Dendritic cell treated with granulocyte-macrophage colony-stimulating factor and Interleukin-4, amounts not matched to agents 40 ng/mL and 50 ng/mL, for 4 days (primary cell): ENCODE measurements at regions of chr4 and their contacts with region 1.

Region 1: DNA sequence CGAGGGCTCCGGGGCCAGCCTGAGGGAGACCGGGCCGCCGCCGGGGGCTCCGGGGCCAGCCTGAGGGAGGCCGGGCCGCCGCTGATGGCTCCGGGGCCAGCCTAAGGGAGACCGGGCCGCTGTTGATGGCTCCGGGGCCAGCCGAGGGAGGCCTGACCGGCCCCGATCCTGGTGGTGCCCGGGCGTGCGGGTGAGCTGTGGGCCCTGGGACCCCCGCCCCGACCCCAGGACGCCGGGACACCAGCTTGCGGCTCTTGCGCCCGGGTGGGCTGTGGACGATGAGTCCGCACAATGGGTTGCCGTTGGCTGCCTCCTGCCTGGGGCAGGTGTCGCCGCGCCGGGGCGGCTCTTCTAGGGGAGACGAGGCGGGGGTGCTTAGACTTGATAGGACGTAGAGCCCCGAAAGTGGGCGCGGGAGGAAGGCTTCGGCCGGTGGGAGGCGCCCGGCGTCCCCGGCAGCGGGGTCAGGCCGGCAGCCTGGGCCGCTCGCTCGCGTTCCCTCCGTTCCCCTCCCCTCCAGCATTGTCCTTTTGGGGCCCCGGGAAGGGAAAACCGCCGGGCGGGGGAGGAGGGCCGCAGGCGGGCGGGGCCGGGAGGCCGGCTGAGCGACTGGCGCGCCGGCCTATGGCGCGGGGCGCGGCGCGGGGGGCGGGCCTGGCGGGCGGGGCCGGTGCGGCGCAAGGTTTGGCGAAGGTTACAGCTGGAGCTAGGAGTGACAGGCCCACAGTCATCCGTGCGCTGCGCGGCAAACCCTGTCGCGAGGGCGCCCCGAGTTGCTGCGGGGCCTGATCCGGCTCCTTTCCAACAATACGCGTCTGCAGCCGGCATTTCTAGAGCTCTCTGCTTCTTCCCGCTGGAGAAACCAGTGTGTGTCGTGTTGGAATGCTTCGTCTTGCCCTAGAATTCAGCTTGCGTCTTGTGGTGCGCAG is 790 bp downstream of the KIAA0232 start:
- H3K4me3 Mint-ChIP-seq: peak overlapping the region; percentile 81
- H3K27ac Mint-ChIP-seq: peak overlapping the region; percentile 85
- H3K4me1 Mint-ChIP-seq: peaks cover 64% of the 10 kb centered on the region
- H3K27me3 Mint-ChIP-seq: peaks cover 3% of the 10 kb centered on the region

Region 2: GRCh38 chr4:6716018-6716911 is 67.1 kb before region 1 on chr4 and contains the start of gene BLOC1S4:
- intact Hi-C with region 1: loop called (anchors 5 kb)
- H3K4me3 Mint-ChIP-seq: peak within 1 kb of the TSS; percentile 98
- H3K27ac Mint-ChIP-seq: peak within 1 kb of the TSS; percentile 97
- H3K4me1 Mint-ChIP-seq: peaks cover 34% of the 10 kb centered on the region
- H3K27me3 Mint-ChIP-seq: peaks cover 3% of the 10 kb centered on the region

Region 3: GRCh38 chr4:6873792-6874461 is 90.6 kb after region 1 on chr4:
- intact Hi-C with region 1: loop called (anchors 5 kb)
- H3K4me3 Mint-ChIP-seq: no peak overlapping the region
- H3K27ac Mint-ChIP-seq: no peak overlapping the region
- H3K4me1 Mint-ChIP-seq: peaks cover 59% of the 10 kb centered on the region
- H3K27me3 Mint-ChIP-seq: no peaks in the 10 kb centered on the region

Region 4: DNA sequence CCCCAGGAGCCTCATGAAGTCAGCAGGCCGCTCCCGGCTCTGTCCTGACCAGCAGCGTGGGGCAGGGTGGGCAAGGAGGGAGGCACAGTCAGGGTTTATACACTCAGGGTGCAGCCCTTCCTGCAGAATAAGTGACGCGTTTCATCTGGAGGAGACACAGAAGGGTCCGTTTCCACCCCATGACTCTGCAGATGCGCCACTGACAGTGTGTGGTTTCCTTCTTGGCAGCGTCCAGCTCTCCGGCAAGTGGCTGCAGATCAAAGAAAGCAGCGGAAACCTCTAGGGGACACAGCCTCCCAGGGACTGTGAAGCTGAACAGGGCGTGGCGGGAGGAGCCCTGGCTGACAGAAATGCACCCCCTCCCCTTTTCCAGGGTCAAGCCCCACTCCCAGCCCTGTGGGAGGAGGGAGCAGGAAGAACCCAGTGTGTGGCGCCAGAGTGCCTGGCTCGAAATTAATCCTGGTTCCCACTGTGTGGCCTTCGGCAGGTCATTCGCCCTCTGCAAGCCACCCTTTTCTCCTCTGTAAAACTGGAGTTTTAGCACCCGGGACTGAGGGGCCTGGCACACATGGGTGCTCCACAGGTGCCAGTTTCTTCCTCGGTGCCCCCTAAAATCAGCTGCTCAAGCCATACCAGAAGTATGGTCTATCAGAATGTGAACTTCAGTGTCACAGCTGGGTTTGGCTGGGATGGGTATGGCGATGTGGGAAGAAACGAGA is 109.0 kb after region 1 on chr4:
- intact Hi-C with region 1: loop called (anchors 5 kb)
- H3K4me3 Mint-ChIP-seq: peak overlapping the region; percentile 37
- H3K27ac Mint-ChIP-seq: peak overlapping the region; percentile 92
- H3K4me1 Mint-ChIP-seq: peaks cover 67% of the 10 kb centered on the region
- H3K27me3 Mint-ChIP-seq: peaks cover 1% of the 10 kb centered on the region

Region 5: DNA sequence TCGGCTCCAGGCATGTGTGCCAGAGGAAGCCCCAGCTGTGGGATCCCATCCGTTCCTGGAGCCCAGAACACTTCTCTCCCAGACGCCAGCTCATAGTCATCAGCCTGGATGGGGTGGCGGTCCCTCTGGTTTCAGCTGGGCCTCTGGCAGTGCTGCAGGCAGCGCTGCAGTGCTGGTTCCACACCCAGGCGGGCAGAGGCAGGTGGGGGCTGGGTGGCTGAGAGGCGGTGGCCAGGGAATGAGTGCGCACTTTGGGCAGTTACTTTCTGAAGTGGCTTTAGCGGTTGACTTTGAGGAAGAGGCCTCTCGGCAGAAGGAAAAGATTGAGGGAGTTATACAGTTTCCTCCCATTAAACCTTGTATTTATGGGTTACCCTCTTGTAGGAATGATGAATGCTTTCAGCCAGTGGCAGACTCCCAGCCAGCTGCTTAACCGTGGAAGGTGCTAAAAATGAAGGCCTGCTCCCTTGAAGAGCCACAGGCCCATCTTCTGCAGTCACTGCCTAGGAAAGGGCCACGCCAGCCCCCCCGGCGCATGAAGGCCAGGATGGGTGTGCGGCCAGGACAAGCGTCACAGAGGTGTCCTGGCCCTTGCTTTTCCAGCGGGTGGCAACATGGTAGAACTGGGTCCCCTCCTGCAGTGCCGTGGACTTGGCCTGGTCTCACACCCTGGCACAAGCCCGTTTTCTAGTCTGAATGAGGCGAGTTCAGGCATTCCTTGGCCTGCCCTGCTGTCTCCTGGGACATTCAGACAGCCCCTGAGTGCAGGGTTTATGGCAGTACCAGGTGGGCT is 269.8 kb after region 1 on chr4:
- intact Hi-C with region 1: no loop called
- H3K4me3 Mint-ChIP-seq: peak overlapping the region; percentile 23
- H3K27ac Mint-ChIP-seq: peak overlapping the region; percentile 80
- H3K4me1 Mint-ChIP-seq: peaks cover 61% of the 10 kb centered on the region
- H3K27me3 Mint-ChIP-seq: no peaks in the 10 kb centered on the region